ENCODE measurements at regions of chr14 and their contacts with region 1.

Region 1: DNA sequence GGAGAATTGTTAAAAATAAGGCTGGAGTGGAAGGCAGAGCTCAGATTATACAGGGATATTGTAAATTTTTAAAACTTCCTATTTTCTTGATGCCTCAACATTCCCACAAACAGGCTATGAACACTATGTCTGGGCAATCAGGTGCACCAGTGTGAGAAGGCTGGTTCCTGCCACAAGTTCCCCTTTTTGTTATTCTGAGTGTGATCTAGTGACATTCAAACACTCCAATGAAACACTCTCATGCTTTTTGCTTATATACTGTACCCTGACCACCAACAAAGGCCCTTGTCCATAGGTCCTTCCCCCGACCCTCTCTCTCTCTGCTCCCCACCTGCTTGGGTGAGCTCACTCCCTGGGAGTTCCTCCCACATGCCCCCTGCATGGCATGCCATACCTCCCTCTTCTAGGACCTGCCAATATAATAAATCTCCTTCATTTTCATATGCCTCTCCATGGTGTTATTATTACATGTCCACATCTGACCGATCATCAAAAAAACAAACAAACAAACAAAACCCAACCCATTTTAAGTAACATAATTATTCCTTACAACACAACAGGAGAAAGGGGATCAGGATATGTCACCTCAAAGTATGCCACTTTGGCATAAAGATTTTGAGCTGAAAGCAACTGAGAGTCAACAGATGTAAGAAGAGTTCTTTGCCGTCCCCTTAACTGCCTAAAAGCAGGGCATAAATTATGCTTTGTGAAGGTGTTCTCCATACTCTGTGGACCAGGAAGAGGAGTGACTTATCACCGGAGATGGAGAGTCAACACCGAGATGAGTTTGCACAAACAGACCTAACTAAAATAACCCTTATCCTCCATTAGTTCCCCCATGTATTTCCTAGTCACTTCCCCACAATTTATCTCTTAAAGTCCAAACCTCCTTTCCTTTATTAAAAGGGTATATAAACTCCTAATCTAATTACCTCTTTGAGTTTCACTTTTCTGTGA is 42.5 kb upstream of the CATSPERB start:
- DNase-seq: no peak
- H3K4me3 ChIP-seq: no peak overlapping the region
- H3K27ac ChIP-seq: peak overlapping the region in 1 of 4 donors; percentile 15
- H3K4me1 ChIP-seq: peaks cover 0 to 8% (median 1%) of the 10 kb centered on the region in 4 donors
- H3K27me3 ChIP-seq: no peaks in the 10 kb centered on the region
- CTCF ChIP-seq: no peak
- EP300 ChIP-seq: no peak
- POLR2A ChIP-seq: no peak

Region 2: DNA sequence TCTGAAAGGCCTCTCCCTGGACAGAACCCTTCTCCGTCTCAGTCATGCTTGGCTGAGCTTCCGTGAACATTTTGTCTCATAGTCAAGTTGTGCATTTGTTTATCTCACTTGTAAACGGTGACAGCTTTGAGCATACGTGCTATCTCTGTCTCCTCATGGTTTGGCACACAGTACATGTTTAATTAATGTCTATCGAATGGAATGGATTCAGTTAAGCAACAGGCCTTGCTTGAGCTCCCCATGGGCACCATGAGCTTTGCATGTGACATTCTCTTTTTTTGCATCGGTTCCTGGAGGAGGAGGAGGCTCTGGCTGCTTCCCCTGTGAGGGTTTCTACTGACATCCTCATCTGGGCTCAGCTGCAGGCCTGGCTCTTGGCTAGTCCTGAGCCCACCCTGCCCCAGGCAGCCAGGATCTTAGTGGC is 1933.9 kb after region 1 on chr14:
- in situ Hi-C with region 1: no loop called
- intact Hi-C with region 1: loop called (anchors 5 kb)
- DNase-seq: no peak
- H3K4me3 ChIP-seq: no peak overlapping the region
- H3K27ac ChIP-seq: peak overlapping the region in 1 of 4 donors; percentile 6
- H3K4me1 ChIP-seq: peaks cover 0 to 3% (median 0%) of the 10 kb centered on the region in 4 donors
- H3K27me3 ChIP-seq: no peaks in the 10 kb centered on the region
- CTCF ChIP-seq: no peak
- EP300 ChIP-seq: no peak
- POLR2A ChIP-seq: no peak